Testis (tissue), 5 donors: ENCODE measurements at regions of chr11 and their contacts with region 1.

Region 1: DNA sequence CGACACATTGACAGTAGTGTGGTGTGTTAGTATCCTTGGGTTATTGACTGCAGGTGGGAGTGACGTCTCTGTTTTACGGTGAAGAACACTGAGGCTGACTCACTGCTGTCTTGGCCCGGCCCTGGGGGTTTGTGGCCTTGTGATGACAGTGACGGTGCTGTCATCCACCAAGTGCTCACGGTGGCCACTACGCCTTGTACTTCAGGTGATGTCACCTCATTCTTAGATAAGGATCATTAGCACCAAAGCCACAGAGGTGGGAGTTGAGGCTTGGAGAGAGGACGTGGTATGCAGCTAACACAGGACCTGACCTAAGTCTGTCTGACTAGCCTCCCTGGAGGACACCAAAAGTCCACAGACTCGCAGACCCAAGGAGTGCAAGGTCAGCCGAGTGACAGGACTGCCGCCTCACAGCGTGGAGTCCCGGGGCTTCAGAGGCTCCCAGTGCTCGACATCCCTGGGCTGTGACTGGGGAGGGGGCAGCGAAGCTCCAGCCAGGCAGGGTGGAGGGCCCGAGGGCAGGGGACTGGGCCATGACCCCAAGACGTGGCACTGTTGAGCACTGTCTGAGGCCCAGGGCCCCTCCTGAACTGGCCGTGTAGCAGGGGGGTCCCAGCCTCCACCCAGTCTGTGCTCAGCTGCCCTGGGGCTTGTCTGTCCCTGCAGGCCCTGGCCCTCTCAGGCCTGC is 56.5 kb downstream of the NAT10 start:
- DNase-seq: no peak
- H3K4me3 ChIP-seq: no peak overlapping the region
- H3K27ac ChIP-seq: no peak overlapping the region
- H3K4me1 ChIP-seq: no peaks in the 10 kb centered on the region
- H3K27me3 ChIP-seq: no peaks in the 10 kb centered on the region
- CTCF ChIP-seq: no peak
- POLR2A ChIP-seq: no peak

Region 2: GRCh38 chr11:34114471-34114870 is 47.5 kb before region 1 on chr11:
- intact Hi-C with region 1: loop called (anchors 10 kb)
- DNase-seq: no peak
- H3K4me3 ChIP-seq: no peak overlapping the region
- H3K27ac ChIP-seq: no peak overlapping the region
- H3K4me1 ChIP-seq: no peaks in the 10 kb centered on the region
- H3K27me3 ChIP-seq: no peaks in the 10 kb centered on the region
- CTCF ChIP-seq: no peak
- POLR2A ChIP-seq: no peak

Region 3: GRCh38 chr11:34313099-34313517 is 151.2 kb after region 1 on chr11:
- intact Hi-C with region 1: no loop called
- DNase-seq: no peak
- H3K4me3 ChIP-seq: no peak overlapping the region
- H3K27ac ChIP-seq: no peak overlapping the region
- H3K4me1 ChIP-seq: peaks cover 14% of the 10 kb centered on the region
- H3K27me3 ChIP-seq: no peaks in the 10 kb centered on the region
- CTCF ChIP-seq: no peak
- POLR2A ChIP-seq: no peak

Region 4: GRCh38 chr11:34344768-34345539 is 183.0 kb after region 1 on chr11:
- intact Hi-C with region 1: no loop called
- DNase-seq: no peak
- H3K4me3 ChIP-seq: no peak overlapping the region
- H3K27ac ChIP-seq: no peak overlapping the region
- H3K4me1 ChIP-seq: peaks cover 18% of the 10 kb centered on the region
- H3K27me3 ChIP-seq: no peaks in the 10 kb centered on the region
- CTCF ChIP-seq: no peak
- POLR2A ChIP-seq: no peak

Region 5: DNA sequence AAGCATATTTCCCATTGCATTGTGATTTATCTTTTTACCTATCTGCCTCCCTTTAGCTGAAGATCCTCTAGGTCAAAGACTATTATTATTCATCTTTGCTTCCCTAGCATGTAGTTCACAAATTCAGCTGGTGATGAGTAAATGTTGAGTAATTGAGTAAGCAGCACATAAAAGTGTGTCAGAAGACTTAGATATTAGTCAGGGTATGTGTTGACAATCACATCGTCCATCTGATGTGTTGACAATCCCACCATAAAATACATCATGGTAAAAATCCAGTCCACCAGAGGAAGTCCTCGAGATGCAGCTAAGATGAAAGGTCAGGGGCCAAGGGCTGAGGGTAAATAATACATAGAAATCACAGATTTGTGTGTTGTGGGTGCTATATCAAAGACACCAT is 218.7 kb after region 1 on chr11:
- intact Hi-C with region 1: no loop called
- DNase-seq: no peak
- H3K4me3 ChIP-seq: no peak overlapping the region
- H3K27ac ChIP-seq: no peak overlapping the region
- H3K4me1 ChIP-seq: no peaks in the 10 kb centered on the region
- H3K27me3 ChIP-seq: no peaks in the 10 kb centered on the region
- CTCF ChIP-seq: no peak
- POLR2A ChIP-seq: no peak